ENCODE measurements at regions of chr9 and their contacts with region 1.

Region 1: DNA sequence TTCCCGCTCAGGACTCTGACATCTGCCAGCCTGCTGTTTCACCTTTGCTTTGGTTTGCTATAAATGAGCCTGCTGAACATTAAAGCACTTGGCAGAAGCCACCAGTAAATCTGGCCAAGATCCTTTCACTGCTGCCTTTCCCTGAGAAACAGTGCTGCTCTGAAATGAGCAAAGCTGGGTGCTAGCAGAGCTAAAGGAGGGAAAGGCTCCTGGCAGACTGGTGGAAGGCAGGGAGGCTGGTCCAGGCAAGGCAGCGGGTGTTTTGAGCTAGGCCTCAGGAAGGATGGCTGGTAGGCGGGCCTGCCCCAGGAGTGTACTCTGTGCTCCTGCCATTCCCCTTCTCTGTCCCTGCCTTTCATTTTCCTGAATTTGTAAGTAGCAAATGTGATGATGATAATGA is 52.5 kb upstream of the PTGS1 start:
- DNase-seq: no peak
- ATAC-seq: peak in 7 of 8 donors; percentile 43 to 79 (median 74)
- H3K4me3 ChIP-seq: no peak overlapping the region
- H3K27ac ChIP-seq: peak overlapping the region in 3 of 10 donors; percentile 13 to 38 (median 27)
- H3K4me1 ChIP-seq: peaks cover 0 to 25% (median 5%) of the 10 kb centered on the region in 9 donors
- H3K27me3 ChIP-seq: no peaks in the 10 kb centered on the region
- CTCF ChIP-seq: no peak

Region 2: GRCh38 chr9:122252796-122253195 is 65.5 kb before region 1 on chr9:
- intact Hi-C with region 1: loop called in 1 of 10 experiments (anchors 2 kb)
- DNase-seq: peak in 1 of 2 donors; percentile 64
- ATAC-seq: peak; percentile 68 to 92 (median 87)
- H3K4me3 ChIP-seq: no peak overlapping the region
- H3K27ac ChIP-seq: peak overlapping the region in 8 of 10 donors; percentile 5 to 71 (median 64)
- H3K4me1 ChIP-seq: peaks cover 2 to 60% (median 26%) of the 10 kb centered on the region in 9 donors
- H3K27me3 ChIP-seq: no peaks in the 10 kb centered on the region
- CTCF ChIP-seq: no peak

Region 3: GRCh38 chr9:122263699-122264349 is 54.5 kb before region 1 on chr9:
- intact Hi-C with region 1: no loop called
- DNase-seq: no peak
- ATAC-seq: peak in 6 of 8 donors; percentile 29 to 56 (median 38)
- H3K4me3 ChIP-seq: peak overlapping the region; percentile 38 to 87 (median 68)
- H3K27ac ChIP-seq: peak overlapping the region; percentile 46 to 98 (median 94)
- H3K4me1 ChIP-seq: peaks cover 5 to 80% (median 52%) of the 10 kb centered on the region in 9 donors
- H3K27me3 ChIP-seq: no peaks in the 10 kb centered on the region
- CTCF ChIP-seq: no peak

Region 4: DNA sequence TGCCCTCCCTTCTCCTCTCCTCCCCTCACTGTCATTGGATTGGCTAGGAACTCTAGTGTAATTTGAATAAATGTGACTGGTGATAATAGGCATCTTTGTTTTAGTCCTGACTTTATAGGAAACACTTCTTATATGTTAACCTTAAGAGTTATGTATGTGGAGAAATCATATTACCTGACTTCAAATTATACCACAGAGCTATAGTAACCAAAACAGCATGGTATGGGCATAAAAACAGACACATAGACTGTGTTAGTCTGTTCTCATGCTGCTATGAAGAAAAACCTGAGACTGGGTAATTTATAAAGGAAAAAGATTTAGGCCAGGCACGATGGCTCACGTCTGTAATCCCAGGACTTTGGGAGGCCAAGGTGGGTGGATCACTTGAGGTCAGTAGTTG is 44.2 kb before region 1 on chr9:
- intact Hi-C with region 1: no loop called
- DNase-seq: no peak
- ATAC-seq: no peak
- H3K4me3 ChIP-seq: no peak overlapping the region
- H3K27ac ChIP-seq: no peak overlapping the region
- H3K4me1 ChIP-seq: peaks cover 0 to 7% (median 0%) of the 10 kb centered on the region in 9 donors
- H3K27me3 ChIP-seq: no peaks in the 10 kb centered on the region
- CTCF ChIP-seq: no peak